ENCODE measurements at regions of chr5 and their contacts with region 1.

Region 1: DNA sequence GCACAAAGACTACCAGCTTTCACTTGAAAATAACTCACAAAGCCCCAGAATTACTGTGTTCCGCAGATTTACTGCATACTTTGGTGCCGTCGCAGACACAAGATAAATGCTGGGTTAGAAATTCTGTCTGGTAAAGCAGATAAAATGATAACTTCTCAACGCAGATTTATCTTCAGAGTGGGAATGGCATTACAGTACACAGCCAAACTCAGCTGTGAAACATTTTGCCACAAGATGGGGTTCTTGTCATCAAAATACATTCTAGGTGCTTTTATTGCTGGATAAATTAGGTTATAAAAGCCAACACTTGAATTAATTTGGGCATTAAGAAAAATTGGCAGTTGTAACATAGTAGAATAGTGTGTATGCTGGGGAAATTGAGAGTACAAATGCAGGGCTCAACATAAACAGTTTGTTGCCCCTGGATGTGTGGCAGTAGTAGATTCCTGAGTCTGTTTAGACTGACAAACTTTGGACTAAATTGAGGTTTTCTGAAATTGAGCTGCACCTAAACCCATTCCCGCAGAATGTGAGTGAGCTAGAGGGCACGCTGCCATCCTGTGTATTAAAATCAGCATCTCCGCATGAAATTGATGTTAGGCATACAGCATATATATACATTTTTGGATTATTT is 61.1 kb downstream of the LMNB1 start:
- DNase-seq: peak in 5 of 9 donors; percentile 21 to 45 (median 31)
- ATAC-seq: peak; percentile 51
- H3K4me3 ChIP-seq: no peak overlapping the region
- H3K4me3 Mint-ChIP-seq: no peak overlapping the region
- H3K27ac ChIP-seq: no peak overlapping the region
- H3K27ac Mint-ChIP-seq: peak overlapping the region in 1 of 9 donors; percentile 30
- H3K4me1 ChIP-seq: no peaks in the 10 kb centered on the region
- H3K4me1 Mint-ChIP-seq: peaks cover 0 to 8% (median 0%) of the 10 kb centered on the region in 7 donors
- H3K27me3 ChIP-seq: no peaks in the 10 kb centered on the region
- H3K27me3 Mint-ChIP-seq: no peaks in the 10 kb centered on the region

Region 2: DNA sequence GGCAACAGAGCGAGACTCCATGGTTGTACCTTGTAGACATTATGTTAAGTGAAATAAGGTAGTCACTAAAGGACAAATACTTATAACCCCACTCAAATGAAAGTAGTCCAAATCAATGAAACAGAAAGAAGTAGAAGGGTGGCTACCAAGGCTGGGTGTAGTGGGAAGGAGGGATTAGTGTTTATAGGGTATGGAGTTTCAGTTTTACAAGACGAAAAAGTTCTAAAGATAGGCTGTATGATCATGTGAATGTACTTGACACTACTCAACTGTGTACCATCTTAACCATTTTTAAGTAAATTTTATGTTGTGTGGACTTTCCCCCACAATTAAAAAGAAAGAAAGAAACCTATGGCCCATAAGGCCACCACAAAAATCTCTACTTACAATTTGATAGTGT is 275.2 kb before region 1 on chr5:
- CTCF ChIA-PET with region 1: no interaction called
- POLR2A ChIA-PET with region 1: no interaction called
- intact Hi-C with region 1: no loop called
- DNase-seq: no peak
- ATAC-seq: no peak
- H3K4me3 ChIP-seq: no peak overlapping the region
- H3K4me3 Mint-ChIP-seq: no peak overlapping the region
- H3K27ac ChIP-seq: no peak overlapping the region
- H3K27ac Mint-ChIP-seq: no peak overlapping the region
- H3K4me1 ChIP-seq: no peaks in the 10 kb centered on the region
- H3K4me1 Mint-ChIP-seq: peaks cover 0 to 2% (median 0%) of the 10 kb centered on the region in 7 donors
- H3K27me3 ChIP-seq: no peaks in the 10 kb centered on the region
- H3K27me3 Mint-ChIP-seq: no peaks in the 10 kb centered on the region

Region 3: DNA sequence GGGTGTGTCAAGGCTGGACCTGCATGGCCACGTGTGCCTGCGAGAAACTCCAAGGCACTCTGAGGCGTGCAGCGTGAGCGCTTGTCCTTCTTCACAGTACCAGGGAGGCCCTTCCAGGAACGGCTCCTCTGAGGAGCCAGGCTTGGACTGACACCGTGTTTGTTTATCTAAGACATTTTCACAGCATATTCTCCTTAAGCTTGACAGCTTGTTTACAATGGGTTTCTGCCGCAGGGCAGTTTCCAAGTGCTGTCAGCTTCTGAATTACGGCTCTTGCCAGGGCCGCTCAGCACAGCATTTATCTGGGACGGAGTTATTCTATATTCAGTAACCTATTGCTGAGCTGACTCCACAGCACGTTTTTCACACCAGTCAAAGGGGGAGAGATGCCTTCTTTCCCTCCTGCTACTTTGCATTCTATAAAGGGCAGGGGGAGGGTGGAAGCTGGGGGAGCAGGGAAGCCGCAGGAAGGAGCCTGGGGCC is 37.3 kb after region 1 on chr5:
- CTCF ChIA-PET with region 1: no interaction called
- POLR2A ChIA-PET with region 1: no interaction called
- intact Hi-C with region 1: no loop called
- DNase-seq: no peak
- ATAC-seq: no peak
- H3K4me3 ChIP-seq: no peak overlapping the region
- H3K4me3 Mint-ChIP-seq: no peak overlapping the region
- H3K27ac ChIP-seq: no peak overlapping the region
- H3K27ac Mint-ChIP-seq: peak overlapping the region in 1 of 9 donors; percentile 7
- H3K4me1 ChIP-seq: no peaks in the 10 kb centered on the region
- H3K4me1 Mint-ChIP-seq: peaks cover 0 to 1% (median 0%) of the 10 kb centered on the region in 7 donors
- H3K27me3 ChIP-seq: no peaks in the 10 kb centered on the region
- H3K27me3 Mint-ChIP-seq: no peaks in the 10 kb centered on the region

Region 4: DNA sequence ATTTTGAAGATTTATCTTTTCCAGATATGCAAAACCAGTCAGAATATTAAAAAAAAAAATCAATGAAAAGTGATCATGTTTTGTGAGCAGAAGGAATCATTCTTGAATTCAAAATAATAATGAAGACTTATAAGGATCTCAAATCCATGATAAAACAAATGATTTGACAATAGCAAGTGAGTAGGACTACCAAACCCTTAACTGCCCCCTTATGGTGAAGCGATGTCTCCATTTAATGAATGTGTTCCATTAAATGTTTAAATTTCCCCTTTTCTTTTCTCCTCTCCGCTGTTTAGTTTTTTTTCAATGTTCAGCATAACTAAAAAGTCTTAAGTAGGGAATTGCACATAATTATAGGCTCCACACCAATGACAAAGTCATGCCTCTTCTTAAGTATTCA is 204.6 kb after region 1 on chr5:
- CTCF ChIA-PET with region 1: interaction called, 3 read pairs
- POLR2A ChIA-PET with region 1: no interaction called
- intact Hi-C with region 1: loop called in 1 of 2 experiments (anchors 1 kb)
- DNase-seq: peak in 1 of 9 donors; percentile 13
- ATAC-seq: no peak
- H3K4me3 ChIP-seq: no peak overlapping the region
- H3K4me3 Mint-ChIP-seq: no peak overlapping the region
- H3K27ac ChIP-seq: no peak overlapping the region
- H3K27ac Mint-ChIP-seq: peak overlapping the region in 1 of 9 donors; percentile 54
- H3K4me1 ChIP-seq: no peaks in the 10 kb centered on the region
- H3K4me1 Mint-ChIP-seq: peaks cover 0 to 1% (median 0%) of the 10 kb centered on the region in 7 donors
- H3K27me3 ChIP-seq: no peaks in the 10 kb centered on the region
- H3K27me3 Mint-ChIP-seq: no peaks in the 10 kb centered on the region